ENCODE measurements at regions of chr17 and their contacts with region 1.

Region 1: GRCh38 chr17:8991514-8992285 is 26.2 kb upstream of the PIK3R5 start:
- H3K4me3 Mint-ChIP-seq: no peak overlapping the region
- H3K27ac Mint-ChIP-seq: no peak overlapping the region
- H3K4me1 Mint-ChIP-seq: peaks cover 17% of the 10 kb centered on the region
- H3K27me3 Mint-ChIP-seq: peaks cover 2% of the 10 kb centered on the region

Region 2: GRCh38 chr17:8875957-8876356 is 115.7 kb before region 1 on chr17:
- intact Hi-C with region 1: no loop called
- H3K4me3 Mint-ChIP-seq: no peak overlapping the region
- H3K27ac Mint-ChIP-seq: no peak overlapping the region
- H3K4me1 Mint-ChIP-seq: peaks cover 55% of the 10 kb centered on the region
- H3K27me3 Mint-ChIP-seq: no peaks in the 10 kb centered on the region

Region 3: DNA sequence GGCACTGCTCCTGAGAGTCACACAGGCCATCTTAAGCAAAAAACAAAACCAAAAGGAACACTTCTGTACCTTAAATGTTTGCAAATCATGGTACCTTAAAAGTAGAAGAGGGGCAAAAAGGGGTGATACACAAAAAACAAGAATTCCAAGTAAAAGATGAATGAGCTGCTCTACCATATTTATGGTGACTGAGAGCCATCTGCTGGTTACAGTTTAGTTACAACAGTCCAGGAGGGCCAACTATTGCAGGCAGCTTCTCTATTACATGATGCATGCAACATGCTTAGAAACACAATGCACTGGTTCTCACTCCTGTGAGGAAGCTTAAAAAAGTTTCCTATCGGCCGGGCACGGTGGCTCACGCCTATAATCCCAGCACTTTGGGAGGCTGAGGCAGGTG is 530.4 kb after region 1 on chr17:
- intact Hi-C with region 1: loop called (anchors 10 kb)
- H3K4me3 Mint-ChIP-seq: no peak overlapping the region
- H3K27ac Mint-ChIP-seq: no peak overlapping the region
- H3K4me1 Mint-ChIP-seq: peaks cover 19% of the 10 kb centered on the region
- H3K27me3 Mint-ChIP-seq: no peaks in the 10 kb centered on the region